ENCODE measurements at regions of chr6 and their contacts with region 1.

Region 1: DNA sequence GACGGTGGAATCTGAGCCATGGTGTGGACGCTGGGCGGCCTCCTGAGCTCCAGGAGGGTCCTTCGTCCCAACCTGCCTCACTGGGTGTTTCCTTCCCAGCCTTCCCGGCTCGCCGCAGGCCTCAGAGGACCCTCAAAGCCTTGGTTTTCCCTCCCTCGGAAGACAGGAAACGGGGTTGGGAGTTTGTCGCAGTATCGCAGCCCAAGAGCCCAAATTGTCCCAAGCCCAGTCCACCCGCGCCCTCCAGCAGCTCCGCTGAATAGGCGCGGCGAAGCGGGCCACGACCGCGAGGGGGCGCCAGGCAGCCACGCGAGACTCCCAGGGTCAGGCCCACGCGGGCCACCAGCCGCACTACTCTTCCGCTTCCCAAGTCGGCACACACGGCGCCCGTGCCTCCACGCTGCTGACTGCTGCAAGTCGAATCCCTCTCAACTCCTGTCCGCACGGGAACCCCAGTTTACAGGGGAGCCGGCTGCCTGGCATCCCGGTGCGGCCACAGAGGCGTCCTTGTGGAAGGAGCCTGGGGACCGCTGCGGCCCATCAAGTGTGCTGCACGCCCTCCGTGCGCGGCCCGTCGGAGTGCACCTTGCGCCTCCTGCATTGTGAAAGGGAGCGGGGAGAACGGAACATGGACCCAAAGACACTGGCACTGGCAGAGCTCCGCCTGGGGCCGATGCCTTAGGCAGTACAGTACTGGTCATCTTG is 40.4 kb upstream of the HMGA1 start:
- DNase-seq: peak; percentile 88
- H3K4me3 ChIP-seq: peak overlapping the region; percentile 72
- H3K27ac ChIP-seq: no peak overlapping the region
- H3K4me1 ChIP-seq: peaks cover 9% of the 10 kb centered on the region
- H3K27me3 ChIP-seq: no peaks in the 10 kb centered on the region
- CTCF ChIP-seq: peak; percentile 98

Region 2: DNA sequence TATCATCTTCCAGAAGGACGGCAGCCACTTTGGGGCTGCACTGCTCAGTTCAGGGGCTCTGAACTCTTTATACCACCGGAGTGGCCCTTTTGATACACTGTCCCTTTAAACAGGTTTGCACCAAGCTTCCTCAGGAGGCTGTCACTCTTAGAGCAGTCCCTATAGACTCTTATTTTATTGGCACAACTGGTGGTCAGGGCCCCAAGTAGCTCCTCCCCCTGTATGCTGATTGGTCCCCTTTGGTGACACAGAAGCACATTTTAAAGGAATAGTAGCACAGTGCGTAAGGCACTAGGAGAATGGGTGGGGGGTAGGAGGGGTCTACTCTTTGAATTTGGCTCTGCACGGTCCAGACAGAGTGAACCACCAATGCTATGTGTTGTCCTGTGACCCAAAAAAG is 269.8 kb before region 1 on chr6:
- intact Hi-C with region 1: no loop called
- DNase-seq: no peak
- H3K4me3 ChIP-seq: no peak overlapping the region
- H3K27ac ChIP-seq: no peak overlapping the region
- H3K4me1 ChIP-seq: no peaks in the 10 kb centered on the region
- H3K27me3 ChIP-seq: peaks cover 54% of the 10 kb centered on the region
- CTCF ChIP-seq: no peak

Region 3: DNA sequence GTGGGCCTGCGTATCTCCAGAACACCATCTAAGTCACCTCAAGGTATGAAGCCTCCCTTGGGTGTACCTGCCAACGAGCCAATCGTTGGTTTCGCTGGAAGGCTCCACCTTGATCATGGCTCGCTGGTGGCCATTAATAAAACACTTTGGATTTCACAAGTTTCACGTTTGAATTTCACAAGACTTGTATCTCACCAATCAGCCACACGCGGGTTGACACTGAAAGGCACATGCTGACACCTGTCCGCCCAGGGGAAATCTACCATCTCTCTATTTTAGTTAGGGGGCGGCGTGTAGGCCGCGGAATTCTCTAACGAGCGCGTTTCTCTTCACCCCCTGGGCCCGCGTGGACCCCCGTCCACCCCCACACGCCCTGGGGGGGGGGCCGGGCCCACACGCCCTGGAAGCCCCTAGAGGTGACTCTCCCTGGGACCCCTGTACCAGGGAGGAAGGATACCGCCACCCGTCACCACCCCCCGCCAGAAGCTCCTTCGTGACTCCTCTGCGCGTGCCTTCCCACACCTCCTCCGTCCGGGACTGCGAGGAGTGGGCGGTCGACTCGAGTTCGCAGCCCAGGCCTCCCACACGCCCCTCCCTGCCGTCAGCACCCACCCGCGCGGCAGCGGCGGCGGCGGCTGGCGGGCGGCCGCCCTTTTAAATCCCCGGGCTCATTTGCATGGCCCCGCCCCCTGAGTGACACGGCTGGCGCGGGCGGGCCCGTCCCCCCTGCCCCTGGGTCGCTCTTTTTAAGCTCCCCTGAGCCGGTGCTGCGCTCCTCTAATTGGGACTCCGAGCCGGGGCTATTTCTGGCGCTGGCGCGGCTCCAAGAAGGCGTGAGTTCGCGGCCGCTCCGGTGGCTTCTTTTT is 40.1 kb after region 1 on chr6 and contains the start of gene HMGA1:
- intact Hi-C with region 1: loop called (anchors 5 kb)
- DNase-seq: peak; percentile 90
- H3K4me3 ChIP-seq: peak within 1 kb of the TSS; percentile 91
- H3K27ac ChIP-seq: peak within 1 kb of the TSS; percentile 88
- H3K4me1 ChIP-seq: peaks cover 27% of the 10 kb centered on the region
- H3K27me3 ChIP-seq: no peaks in the 10 kb centered on the region
- CTCF ChIP-seq: no peak
- total RNA-seq, gene HMGA1: 46.7 TPM

Region 4: GRCh38 chr6:34370361-34370760 is 174.1 kb after region 1 on chr6:
- intact Hi-C with region 1: no loop called
- DNase-seq: no peak
- H3K4me3 ChIP-seq: no peak overlapping the region
- H3K27ac ChIP-seq: peak overlapping the region; percentile 70
- H3K4me1 ChIP-seq: peaks cover 52% of the 10 kb centered on the region
- H3K27me3 ChIP-seq: no peaks in the 10 kb centered on the region
- CTCF ChIP-seq: no peak